CD4-positive, alpha-beta T cell (primary cell): ENCODE measurements at regions of chr10 and their contacts with region 1.

Region 1: DNA sequence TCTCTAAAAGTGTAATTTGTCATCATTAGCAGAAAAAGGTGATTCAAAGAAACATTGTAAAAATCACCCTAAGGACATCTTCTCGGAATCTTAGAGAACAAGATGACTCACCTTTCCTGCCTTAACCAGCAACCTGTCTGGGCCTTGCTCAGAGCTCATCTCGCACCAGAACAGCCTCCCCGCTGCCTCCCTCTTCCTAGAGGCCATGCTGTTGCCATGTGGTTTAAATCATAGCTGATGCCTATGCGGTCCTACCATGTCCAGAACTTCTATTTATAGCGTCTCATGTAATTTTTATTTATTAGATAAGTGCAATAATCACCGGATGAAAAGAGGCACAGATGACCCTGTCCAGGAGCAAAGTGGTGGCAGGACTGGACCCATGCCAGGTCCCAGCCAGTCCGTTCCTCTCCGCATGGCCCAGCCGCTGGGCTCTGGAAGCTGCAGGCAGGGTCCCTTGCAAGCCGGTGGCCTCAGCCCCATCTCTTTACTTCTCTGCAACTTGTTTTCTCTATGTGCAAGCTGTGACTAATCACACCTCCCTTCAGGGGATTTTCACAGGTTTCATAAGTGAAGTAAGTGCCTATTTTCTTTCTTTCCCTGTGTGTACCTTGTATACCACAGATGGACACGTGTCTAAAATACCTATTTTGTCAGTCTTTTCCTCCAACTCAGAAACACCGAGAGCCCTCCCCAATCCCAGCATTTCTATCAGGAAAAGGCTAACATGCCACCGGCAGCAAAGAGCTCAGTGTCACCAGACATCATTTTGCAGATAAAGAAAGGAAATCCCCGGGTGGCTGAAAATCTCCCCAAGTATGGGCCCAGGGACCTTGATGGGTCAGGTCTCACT is 27.1 kb downstream of the KLF6 start:
- DNase-seq: peak; percentile 36 to 85 (median 60)
- ATAC-seq: peak; percentile 80
- H3K4me3 ChIP-seq: no peak overlapping the region
- H3K4me3 Mint-ChIP-seq: peak overlapping the region; percentile 71
- H3K27ac ChIP-seq: peak overlapping the region; percentile 60 to 78
- H3K27ac Mint-ChIP-seq: peak overlapping the region; percentile 90
- H3K4me1 ChIP-seq: peaks cover 71% of the 10 kb centered on the region
- H3K4me1 Mint-ChIP-seq: peaks cover 39% of the 10 kb centered on the region
- H3K27me3 ChIP-seq: no peaks in the 10 kb centered on the region
- H3K27me3 Mint-ChIP-seq: no peaks in the 10 kb centered on the region
- CTCF ChIP-seq: no peak

Region 2: GRCh38 chr10:3516234-3516922 is 241.5 kb before region 1 on chr10:
- CTCF ChIA-PET with region 1: no interaction called
- POLR2A ChIA-PET with region 1: no interaction called
- intact Hi-C with region 1: no loop called
- DNase-seq: peak in 1 of 14 experiments; percentile 6
- ATAC-seq: no peak
- H3K4me3 ChIP-seq: no peak overlapping the region
- H3K4me3 Mint-ChIP-seq: no peak overlapping the region
- H3K27ac ChIP-seq: no peak overlapping the region
- H3K27ac Mint-ChIP-seq: no peak overlapping the region
- H3K4me1 ChIP-seq: peaks cover 11% of the 10 kb centered on the region
- H3K4me1 Mint-ChIP-seq: no peaks in the 10 kb centered on the region
- H3K27me3 ChIP-seq: peaks cover 0 to 2% of the 10 kb centered on the region in 2 experiments
- H3K27me3 Mint-ChIP-seq: no peaks in the 10 kb centered on the region
- CTCF ChIP-seq: no peak

Region 3: DNA sequence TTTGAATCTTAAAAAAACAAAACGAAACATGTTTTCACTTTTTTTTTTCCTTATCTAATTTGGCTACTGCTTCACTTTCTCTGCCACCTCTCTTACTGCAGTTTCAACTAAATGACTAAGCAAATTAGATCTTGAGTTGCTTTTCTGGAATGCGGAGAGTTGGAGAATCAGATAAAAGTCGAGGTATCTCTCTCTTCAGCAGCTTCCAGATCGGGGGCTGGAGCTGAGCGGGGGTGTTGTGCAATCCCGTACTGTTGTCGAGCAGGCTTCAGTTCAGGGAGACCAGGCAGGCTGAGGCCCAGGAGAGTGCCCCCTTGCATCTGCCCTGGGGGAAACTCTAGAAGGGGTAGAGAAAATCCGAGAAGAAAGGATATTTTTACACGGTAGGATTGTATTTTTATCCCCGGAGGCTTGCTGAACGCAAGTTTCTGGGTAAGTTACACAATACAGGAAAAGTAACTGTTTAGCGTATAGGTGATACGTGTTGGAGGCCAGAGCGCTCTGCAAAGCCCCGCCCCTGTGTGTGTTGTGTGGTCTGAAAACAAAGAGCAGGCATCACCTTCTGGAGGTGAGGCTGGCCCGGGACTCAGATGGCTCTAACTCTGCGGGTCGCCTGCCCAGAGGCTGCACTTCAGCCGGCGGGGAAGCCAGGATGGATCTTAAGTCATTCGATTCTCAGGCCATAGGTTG is 89.4 kb before region 1 on chr10:
- CTCF ChIA-PET with region 1: no interaction called
- POLR2A ChIA-PET with region 1: no interaction called
- intact Hi-C with region 1: loop called in 1 of 2 experiments (anchors 5 kb)
- DNase-seq: peak; percentile 49 to 89 (median 65)
- ATAC-seq: peak; percentile 90
- H3K4me3 ChIP-seq: peak overlapping the region; percentile 66
- H3K4me3 Mint-ChIP-seq: peak overlapping the region; percentile 89
- H3K27ac ChIP-seq: peak overlapping the region; percentile 65 to 88
- H3K27ac Mint-ChIP-seq: peak overlapping the region; percentile 93
- H3K4me1 ChIP-seq: peaks cover 49% of the 10 kb centered on the region
- H3K4me1 Mint-ChIP-seq: peaks cover 44% of the 10 kb centered on the region
- H3K27me3 ChIP-seq: no peaks in the 10 kb centered on the region
- H3K27me3 Mint-ChIP-seq: no peaks in the 10 kb centered on the region
- CTCF ChIP-seq: no peak

Region 4: DNA sequence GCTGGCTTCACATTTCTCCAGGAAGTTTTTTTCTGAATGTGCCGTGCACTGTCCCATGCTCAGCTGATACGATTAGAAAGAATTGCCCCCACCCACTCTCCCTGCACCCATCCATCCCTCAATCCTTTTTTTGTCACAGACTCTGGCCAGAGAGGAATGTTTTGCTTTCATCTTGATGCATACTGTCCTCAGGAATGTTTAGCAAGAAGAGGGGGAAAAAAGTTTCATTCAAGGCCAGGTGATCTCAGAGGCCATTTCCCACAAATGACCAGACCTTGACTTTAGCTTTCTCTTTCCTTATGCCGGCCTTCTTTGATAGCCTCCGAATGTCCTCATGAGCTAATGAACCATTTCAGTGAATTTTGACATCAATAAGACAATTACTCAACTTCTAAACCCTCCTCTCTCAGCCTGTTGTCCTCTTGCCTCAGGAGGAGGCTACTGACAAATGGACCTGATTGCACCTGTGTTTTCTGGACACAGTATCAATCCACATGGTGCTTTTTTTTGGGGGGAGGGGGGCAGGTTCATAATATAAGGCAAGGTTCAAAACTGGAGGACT is 132.2 kb after region 1 on chr10:
- CTCF ChIA-PET with region 1: no interaction called
- POLR2A ChIA-PET with region 1: no interaction called
- intact Hi-C with region 1: no loop called
- DNase-seq: no peak
- ATAC-seq: no peak
- H3K4me3 ChIP-seq: no peak overlapping the region
- H3K4me3 Mint-ChIP-seq: no peak overlapping the region
- H3K27ac ChIP-seq: no peak overlapping the region
- H3K27ac Mint-ChIP-seq: no peak overlapping the region
- H3K4me1 ChIP-seq: peaks cover 57% of the 10 kb centered on the region
- H3K4me1 Mint-ChIP-seq: peaks cover 30% of the 10 kb centered on the region
- H3K27me3 ChIP-seq: no peaks in the 10 kb centered on the region
- H3K27me3 Mint-ChIP-seq: no peaks in the 10 kb centered on the region
- CTCF ChIP-seq: no peak